A673 (cell line): ENCODE measurements at regions of chr17 and their contacts with region 1.

Region 1: GRCh38 chr17:5584383-5585286 is at the start of gene NLRP1:
- DNase-seq: peak; percentile 68
- H3K4me3 ChIP-seq: no peak within 1 kb of the TSS
- H3K27ac ChIP-seq: no peak within 1 kb of the TSS
- H3K4me1 ChIP-seq: no peaks in the 10 kb centered on the region
- H3K27me3 ChIP-seq: no peaks in the 10 kb centered on the region
- CTCF ChIP-seq: no peak
- total RNA-seq, gene NLRP1: 5.2 and 6.7 TPM in 2 replicates

Region 2: DNA sequence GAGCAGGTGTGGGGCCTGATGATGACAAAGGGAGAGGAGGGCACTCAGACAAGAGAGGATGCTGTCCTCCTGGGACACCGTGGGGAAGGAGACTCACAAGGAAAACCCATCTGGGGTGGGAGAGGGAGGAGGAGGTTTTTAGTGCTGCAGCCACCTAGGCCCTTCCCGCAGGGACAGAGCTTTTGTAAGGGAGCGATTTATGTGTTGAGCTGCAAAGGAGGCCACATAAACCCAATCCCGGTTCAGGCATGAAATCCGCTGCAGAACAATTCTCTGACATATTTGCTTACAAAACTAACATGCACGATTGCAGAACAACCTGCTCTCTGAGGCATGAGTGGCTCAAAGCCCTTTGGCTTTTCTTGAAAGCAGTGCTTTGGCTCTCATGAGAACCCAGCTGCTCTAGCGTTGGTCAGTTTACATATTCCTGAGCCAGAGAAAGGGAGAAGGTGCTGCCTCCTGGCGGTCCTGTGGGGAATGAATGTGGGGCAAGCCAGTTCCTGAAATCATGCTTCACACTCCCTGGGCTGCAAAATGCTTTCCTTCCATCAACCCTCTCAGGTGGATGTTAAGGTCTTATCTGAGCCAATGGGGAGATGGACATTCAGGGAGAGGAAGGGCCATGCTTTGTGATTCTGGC is 122.1 kb after region 1 on chr17:
- CTCF ChIA-PET with region 1: interaction called, 13 read pairs
- POLR2A ChIA-PET with region 1: no interaction called
- intact Hi-C with region 1: loop called (anchors 1 kb)
- DNase-seq: peak; percentile 64
- H3K4me3 ChIP-seq: no peak overlapping the region
- H3K27ac ChIP-seq: no peak overlapping the region
- H3K4me1 ChIP-seq: no peaks in the 10 kb centered on the region
- H3K27me3 ChIP-seq: peaks cover 31% of the 10 kb centered on the region
- CTCF ChIP-seq: peak; percentile 85

Region 3: DNA sequence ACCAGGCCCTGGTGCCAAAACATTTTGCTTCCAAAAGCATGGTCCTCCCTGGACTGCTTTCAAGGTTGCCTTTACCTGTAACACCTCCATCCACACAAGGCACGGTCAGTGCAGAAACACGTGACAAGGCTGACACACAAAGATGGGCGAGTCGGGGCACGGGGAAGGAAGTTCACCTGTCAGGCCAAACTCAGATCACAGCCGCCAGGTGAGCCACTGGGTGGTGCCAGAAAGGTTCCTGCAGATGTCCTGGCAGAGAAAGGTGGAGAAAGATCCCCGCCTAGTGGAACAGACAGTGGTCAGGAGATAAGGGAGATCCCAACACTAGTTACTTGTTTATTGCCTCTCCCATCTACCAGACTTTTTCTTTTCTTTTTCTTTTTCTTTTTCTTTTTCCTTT is 695.0 kb after region 1 on chr17:
- CTCF ChIA-PET with region 1: no interaction called
- POLR2A ChIA-PET with region 1: no interaction called
- intact Hi-C with region 1: loop called (anchors 5 kb)
- DNase-seq: peak; percentile 15
- H3K4me3 ChIP-seq: no peak overlapping the region
- H3K27ac ChIP-seq: no peak overlapping the region
- H3K4me1 ChIP-seq: no peaks in the 10 kb centered on the region
- H3K27me3 ChIP-seq: peaks cover 51% of the 10 kb centered on the region
- CTCF ChIP-seq: peak; percentile 24; the same call in 1 of the 2 replicates

Region 4: DNA sequence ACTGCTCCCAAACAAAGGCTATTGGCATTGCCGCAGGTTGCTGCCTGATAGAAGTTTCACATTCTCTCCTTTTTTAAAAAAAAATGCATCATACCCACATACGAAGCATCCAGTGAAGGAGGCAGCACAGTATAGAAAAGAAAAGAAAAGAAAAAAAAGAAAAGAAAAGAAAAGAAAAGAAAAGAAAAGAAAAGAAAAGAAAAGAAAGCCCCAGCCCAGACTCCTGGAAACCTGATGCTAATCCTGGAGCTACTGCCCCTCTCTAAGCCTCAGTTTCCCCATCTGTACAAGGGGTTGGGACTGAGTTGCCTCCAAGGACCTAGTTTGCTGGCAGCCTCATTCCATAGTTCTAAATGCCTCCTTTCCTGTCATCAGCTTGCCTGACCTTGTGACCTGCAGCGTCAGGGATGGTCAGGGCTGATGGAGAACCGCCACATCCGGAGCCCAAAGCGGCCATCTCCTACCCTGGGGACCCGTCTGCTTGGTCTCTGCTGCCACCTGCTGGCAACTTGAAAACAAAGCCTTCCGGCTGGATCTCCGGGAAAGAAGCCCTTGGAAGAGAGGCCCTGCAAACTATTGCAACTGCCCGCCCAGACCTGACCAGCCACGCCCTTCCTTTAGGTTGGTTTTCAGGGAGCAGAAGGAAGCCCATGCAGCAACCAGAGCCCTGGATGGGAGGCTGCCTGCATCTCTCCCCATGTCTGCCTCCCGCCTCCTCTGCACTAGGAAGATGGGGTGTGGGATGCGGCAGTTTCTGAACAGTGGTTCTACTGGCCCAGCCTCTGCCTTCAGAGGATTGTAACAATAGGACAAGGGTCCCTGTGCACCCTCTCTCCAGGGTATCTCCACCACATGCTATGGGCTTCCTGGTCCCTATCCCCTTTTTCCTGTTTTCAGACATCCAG is 837.3 kb after region 1 on chr17:
- CTCF ChIA-PET with region 1: interaction called, 3 read pairs
- POLR2A ChIA-PET with region 1: no interaction called
- intact Hi-C with region 1: loop called (anchors 1 kb)
- DNase-seq: peak; percentile 81
- H3K4me3 ChIP-seq: no peak overlapping the region
- H3K27ac ChIP-seq: no peak overlapping the region
- H3K4me1 ChIP-seq: no peaks in the 10 kb centered on the region
- H3K27me3 ChIP-seq: peaks cover 18% of the 10 kb centered on the region
- CTCF ChIP-seq: peak; percentile 87

Region 5: GRCh38 chr17:6435968-6436367 is 851.3 kb after region 1 on chr17:
- CTCF ChIA-PET with region 1: interaction called, 3 read pairs
- POLR2A ChIA-PET with region 1: no interaction called
- intact Hi-C with region 1: loop called (anchors 5 kb)
- DNase-seq: peak; percentile 71
- H3K4me3 ChIP-seq: no peak overlapping the region
- H3K27ac ChIP-seq: no peak overlapping the region
- H3K4me1 ChIP-seq: no peaks in the 10 kb centered on the region
- H3K27me3 ChIP-seq: peaks cover 4% of the 10 kb centered on the region
- CTCF ChIP-seq: peak; percentile 86